Caco-2 (cell line): ENCODE measurements at regions of chr7 and their contacts with region 1.

Region 1: DNA sequence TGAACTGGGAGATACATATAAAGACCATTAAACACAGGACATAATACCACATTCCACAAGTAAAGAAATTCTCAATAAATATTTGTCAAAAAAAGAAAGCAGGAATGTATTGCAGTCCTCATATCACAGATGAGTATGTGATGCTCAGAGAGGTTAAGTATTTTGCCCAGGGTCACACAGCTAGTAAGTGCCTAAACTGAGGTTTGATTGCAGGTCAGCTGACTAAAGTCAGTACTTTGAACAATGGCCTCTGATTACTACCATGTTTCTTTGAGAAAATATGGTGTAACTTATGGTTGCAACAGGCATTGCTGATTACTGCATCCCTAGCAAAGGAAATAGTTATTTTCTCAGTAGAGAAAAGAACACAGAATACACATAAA is 267.1 kb downstream of the ELMO1 start:
- DNase-seq: no peak
- H3K4me3 ChIP-seq: no peak overlapping the region
- H3K4me3 Mint-ChIP-seq: no peak overlapping the region
- H3K27ac Mint-ChIP-seq: no peak overlapping the region
- H3K4me1 ChIP-seq: peaks cover 14% of the 10 kb centered on the region
- H3K4me1 Mint-ChIP-seq: no peaks in the 10 kb centered on the region
- H3K27me3 ChIP-seq: no peaks in the 10 kb centered on the region
- H3K27me3 Mint-ChIP-seq: no peaks in the 10 kb centered on the region
- CTCF ChIP-seq: no peak

Region 2: GRCh38 chr7:36487756-36488336 is 693.7 kb before region 1 on chr7:
- CTCF ChIA-PET with region 1: interaction called, 21 read pairs
- POLR2A ChIA-PET with region 1: no interaction called
- intact Hi-C with region 1: loop called (anchors 1 kb)
- DNase-seq: peak in 1 of 2 experiments; percentile 55
- H3K4me3 ChIP-seq: no peak overlapping the region
- H3K4me3 Mint-ChIP-seq: no peak overlapping the region
- H3K27ac Mint-ChIP-seq: no peak overlapping the region
- H3K4me1 ChIP-seq: peaks cover 12% of the 10 kb centered on the region; the same call in 1 of the 2 replicates
- H3K4me1 Mint-ChIP-seq: no peaks in the 10 kb centered on the region
- H3K27me3 ChIP-seq: no peaks in the 10 kb centered on the region
- H3K27me3 Mint-ChIP-seq: no peaks in the 10 kb centered on the region
- CTCF ChIP-seq: peak; percentile 74 to 78

Region 3: GRCh38 chr7:36986429-36987362 is 194.8 kb before region 1 on chr7:
- CTCF ChIA-PET with region 1: interaction called, 12 read pairs
- POLR2A ChIA-PET with region 1: no interaction called
- intact Hi-C with region 1: loop called (anchors 1 kb)
- DNase-seq: peak; percentile 58 to 60
- H3K4me3 ChIP-seq: no peak overlapping the region
- H3K4me3 Mint-ChIP-seq: no peak overlapping the region
- H3K27ac Mint-ChIP-seq: no peak overlapping the region
- H3K4me1 ChIP-seq: peaks cover 9% of the 10 kb centered on the region; the same call in 1 of the 2 replicates
- H3K4me1 Mint-ChIP-seq: no peaks in the 10 kb centered on the region
- H3K27me3 ChIP-seq: no peaks in the 10 kb centered on the region
- H3K27me3 Mint-ChIP-seq: no peaks in the 10 kb centered on the region
- CTCF ChIP-seq: peak; percentile 43 to 83

Region 4: DNA sequence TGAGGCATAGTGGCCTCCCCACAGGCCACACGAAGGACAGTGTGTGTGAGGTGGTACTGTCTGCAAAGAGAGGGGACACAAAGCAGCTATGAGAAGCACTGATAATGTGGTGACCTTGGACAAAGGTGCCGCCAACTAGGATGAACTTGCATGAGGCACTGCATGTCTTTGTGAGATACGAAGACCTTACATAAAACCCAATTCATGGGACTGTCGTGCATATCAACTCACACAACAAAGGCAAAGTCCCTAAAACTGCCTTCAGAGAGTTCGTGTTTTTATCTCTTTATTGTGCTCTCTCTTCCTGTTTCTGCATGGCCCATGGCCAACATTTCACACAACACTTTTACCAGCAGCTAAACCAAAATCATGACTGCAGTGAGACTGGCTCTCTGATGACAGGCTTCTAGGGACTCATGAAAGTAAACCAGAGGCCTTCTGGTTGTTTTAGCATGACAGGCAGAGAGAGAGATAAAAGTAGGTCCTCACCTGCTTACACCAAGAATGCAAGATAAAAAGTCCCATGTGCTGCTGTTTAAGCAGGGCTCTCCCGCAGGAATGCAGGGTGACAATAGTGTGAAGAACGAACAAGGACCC is 80.7 kb before region 1 on chr7:
- CTCF ChIA-PET with region 1: no interaction called
- POLR2A ChIA-PET with region 1: no interaction called
- intact Hi-C with region 1: loop called (anchors 5 kb)
- DNase-seq: peak; percentile 53 to 66
- H3K4me3 ChIP-seq: no peak overlapping the region
- H3K4me3 Mint-ChIP-seq: peak overlapping the region; percentile 20
- H3K27ac Mint-ChIP-seq: peak overlapping the region; percentile 63
- H3K4me1 ChIP-seq: peaks cover 32% of the 10 kb centered on the region
- H3K4me1 Mint-ChIP-seq: peaks cover 17% of the 10 kb centered on the region
- H3K27me3 ChIP-seq: no peaks in the 10 kb centered on the region
- H3K27me3 Mint-ChIP-seq: no peaks in the 10 kb centered on the region
- CTCF ChIP-seq: no peak